GM12878 (cell line): ENCODE measurements at regions of chr19 and their contacts with region 1.

Region 1: GRCh38 chr19:16185123-16185767 is at the start of gene FAM32A:
- DNase-seq: peak; percentile 98
- ATAC-seq: peak; percentile 94
- H3K4me3 ChIP-seq: peak within 1 kb of the TSS; percentile 82
- H3K27ac ChIP-seq: peak within 1 kb of the TSS; percentile 70
- H3K4me1 ChIP-seq: peaks cover 2% of the 10 kb centered on the region; the same call in 1 of the 2 replicates
- H3K27me3 ChIP-seq: no peaks in the 10 kb centered on the region
- CTCF ChIP-seq: no peak
- EP300 ChIP-seq: no peak
- POLR2A ChIP-seq: peak; percentile 93
- RAD21 ChIP-seq: no peak
- polyA plus RNA-seq, gene FAM32A: 33.3 to 43.0 TPM

Region 2: DNA sequence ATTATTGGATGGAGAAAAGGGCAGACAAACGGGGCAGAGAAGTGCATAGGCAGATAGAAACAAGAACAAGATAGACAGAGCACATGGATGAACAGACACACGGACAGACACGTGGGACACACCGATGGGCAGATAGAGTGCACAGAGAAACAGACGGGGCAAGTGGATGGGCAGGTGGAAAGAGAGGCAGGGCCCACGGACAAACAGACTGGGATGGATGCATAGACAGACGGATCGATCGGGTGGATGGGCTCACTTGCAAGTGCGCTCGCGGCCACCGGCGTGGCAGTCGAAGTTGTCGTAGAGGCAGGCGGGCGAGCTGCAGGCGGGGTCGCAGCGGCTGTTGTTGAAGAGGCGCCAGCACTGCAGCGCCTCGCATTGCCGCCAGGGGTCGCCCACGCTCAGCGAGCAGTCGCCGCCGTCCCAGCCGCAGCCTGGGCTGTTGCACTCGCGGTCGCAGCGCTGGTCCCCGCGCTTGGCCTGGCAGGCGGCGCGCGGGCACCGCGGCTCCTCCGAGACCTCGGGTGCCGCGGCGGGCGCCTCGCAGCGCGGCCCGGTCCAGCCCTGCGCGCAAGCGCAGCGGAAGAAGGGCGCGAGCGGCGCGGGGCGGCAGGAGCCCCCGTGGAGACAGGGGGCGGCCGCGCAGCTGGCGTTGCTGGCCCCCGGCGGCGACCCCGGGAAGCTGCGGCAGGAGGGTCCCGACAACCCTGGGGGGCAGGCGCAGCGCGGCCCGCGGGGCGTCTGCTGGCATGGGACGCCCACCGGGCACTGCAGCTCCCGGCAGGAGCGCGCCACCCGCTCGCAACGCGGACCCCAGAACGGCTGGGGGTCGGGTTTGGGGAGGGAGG is 1007.8 kb before region 1 on chr19:
- CTCF ChIA-PET with region 1: no interaction called
- POLR2A ChIA-PET with region 1: no interaction called
- RAD21 ChIA-PET with region 1: no interaction called
- SMC1A ChIA-PET with region 1: no interaction called
- in situ Hi-C with region 1: no loop called
- intact Hi-C with region 1: no loop called
- DNase-seq: peak; percentile 4
- ATAC-seq: peak; percentile 99
- H3K4me3 ChIP-seq: no peak overlapping the region
- H3K27ac ChIP-seq: no peak overlapping the region
- H3K4me1 ChIP-seq: no peaks in the 10 kb centered on the region
- H3K27me3 ChIP-seq: no peaks in the 10 kb centered on the region
- CTCF ChIP-seq: peak; percentile 82 to 99 (median 87)
- EP300 ChIP-seq: no peak
- POLR2A ChIP-seq: no peak
- RAD21 ChIP-seq: peak; percentile 66

Region 3: GRCh38 chr19:15629003-15629880 is 556.0 kb before region 1 on chr19:
- CTCF ChIA-PET with region 1: interaction called, 3 read pairs
- POLR2A ChIA-PET with region 1: no interaction called
- RAD21 ChIA-PET with region 1: interaction called, 5 read pairs
- SMC1A ChIA-PET with region 1: interaction called, 8 read pairs
- in situ Hi-C with region 1: loop called (anchors 5 kb)
- intact Hi-C with region 1: loop called (anchors 1 kb)
- DNase-seq: peak; percentile 9
- ATAC-seq: peak; percentile 93
- H3K4me3 ChIP-seq: no peak overlapping the region
- H3K27ac ChIP-seq: no peak overlapping the region
- H3K4me1 ChIP-seq: no peaks in the 10 kb centered on the region
- H3K27me3 ChIP-seq: no peaks in the 10 kb centered on the region
- CTCF ChIP-seq: peak; percentile 90 to 96 (median 95)
- EP300 ChIP-seq: no peak
- POLR2A ChIP-seq: no peak
- RAD21 ChIP-seq: peak; percentile 93

Region 4: DNA sequence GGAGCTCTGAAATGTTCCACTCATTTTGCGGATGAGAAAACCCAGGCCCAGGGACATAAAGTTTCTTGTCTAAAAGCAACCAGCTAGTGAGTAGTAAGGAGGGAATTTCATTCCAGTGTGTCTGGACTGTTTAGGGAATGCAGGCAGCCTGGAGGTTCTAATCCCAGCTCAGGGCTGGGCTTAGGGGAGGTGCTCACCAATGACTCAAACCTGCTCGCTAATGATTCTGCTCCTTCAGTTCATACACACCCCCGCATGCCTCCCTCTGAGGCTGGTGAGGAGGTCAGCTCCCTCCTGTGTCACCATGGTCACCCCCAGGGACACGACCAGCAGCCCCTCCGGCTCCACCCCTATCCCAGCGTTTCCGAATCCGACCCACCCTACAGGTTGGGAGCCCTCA is 322.0 kb before region 1 on chr19:
- CTCF ChIA-PET with region 1: no interaction called
- POLR2A ChIA-PET with region 1: no interaction called
- RAD21 ChIA-PET with region 1: no interaction called
- SMC1A ChIA-PET with region 1: no interaction called
- in situ Hi-C with region 1: no loop called
- intact Hi-C with region 1: no loop called
- DNase-seq: no peak
- ATAC-seq: no peak
- H3K4me3 ChIP-seq: no peak overlapping the region
- H3K27ac ChIP-seq: no peak overlapping the region
- H3K4me1 ChIP-seq: no peaks in the 10 kb centered on the region
- H3K27me3 ChIP-seq: no peaks in the 10 kb centered on the region
- CTCF ChIP-seq: no peak
- EP300 ChIP-seq: no peak
- POLR2A ChIP-seq: no peak
- RAD21 ChIP-seq: no peak

Region 5: DNA sequence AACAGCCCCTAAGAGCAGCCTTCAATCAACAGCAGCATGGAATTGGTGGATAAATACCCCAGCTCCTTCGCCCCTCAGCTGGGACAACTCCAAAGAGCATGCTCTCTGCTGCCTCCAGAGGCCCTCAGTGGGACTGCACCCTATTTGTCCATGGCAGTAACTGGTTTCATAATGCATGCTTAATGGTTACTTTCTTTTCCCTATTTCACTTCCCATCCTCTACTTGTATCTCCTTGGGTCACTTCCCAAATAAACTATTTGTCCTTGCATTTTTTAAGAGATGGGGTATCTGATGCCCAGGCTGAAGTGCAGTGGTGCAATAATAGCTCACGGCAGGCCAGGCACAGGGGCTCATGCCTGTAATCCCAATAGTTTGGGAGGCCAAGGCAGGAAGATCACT is 122.5 kb before region 1 on chr19:
- CTCF ChIA-PET with region 1: interaction called, 31 read pairs
- POLR2A ChIA-PET with region 1: interaction called, 7 read pairs
- RAD21 ChIA-PET with region 1: interaction called, 6 read pairs
- SMC1A ChIA-PET with region 1: interaction called, 3 read pairs
- in situ Hi-C with region 1: loop called (anchors 5 kb)
- intact Hi-C with region 1: loop called (anchors 1 kb)
- DNase-seq: no peak
- ATAC-seq: peak; percentile 77
- H3K4me3 ChIP-seq: no peak overlapping the region
- H3K27ac ChIP-seq: no peak overlapping the region
- H3K4me1 ChIP-seq: peaks cover 6% of the 10 kb centered on the region; the same call in 1 of the 2 replicates
- H3K27me3 ChIP-seq: no peaks in the 10 kb centered on the region
- CTCF ChIP-seq: peak; percentile 60 to 95 (median 91)
- EP300 ChIP-seq: no peak
- POLR2A ChIP-seq: no peak
- RAD21 ChIP-seq: peak; percentile 25

Region 6: DNA sequence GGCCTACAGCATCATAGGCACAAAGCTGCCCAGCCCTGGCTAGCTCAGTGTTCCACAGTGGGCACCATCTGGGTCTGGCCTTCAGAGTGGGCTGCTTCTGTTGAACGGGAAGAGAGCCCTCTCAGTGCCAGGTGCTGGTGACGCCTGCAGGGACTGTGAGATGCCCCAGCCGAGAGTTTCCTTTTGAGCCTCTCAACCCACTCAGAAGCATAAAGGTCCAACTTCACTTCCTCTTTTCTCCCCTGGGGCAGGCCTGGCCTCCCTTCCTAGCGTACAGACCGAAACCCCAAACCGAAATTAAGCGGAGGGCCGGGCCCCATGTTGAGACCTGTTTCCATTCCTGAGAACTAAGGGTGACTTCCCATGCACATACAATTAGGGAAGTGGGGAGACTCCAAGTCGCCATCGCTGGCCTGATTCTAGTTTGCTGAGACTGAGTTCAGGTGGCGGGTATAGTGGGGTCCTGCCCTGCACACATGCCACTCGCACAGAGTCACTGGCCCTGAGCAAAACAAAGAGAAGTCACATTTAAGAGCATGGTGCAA is 66.7 kb before region 1 on chr19:
- CTCF ChIA-PET with region 1: interaction called, 59 read pairs
- POLR2A ChIA-PET with region 1: interaction called, 11 read pairs
- RAD21 ChIA-PET with region 1: interaction called, 21 read pairs
- SMC1A ChIA-PET with region 1: interaction called, 49 read pairs
- in situ Hi-C with region 1: no loop called
- intact Hi-C with region 1: loop called (anchors 1 kb)
- DNase-seq: peak; percentile 97
- ATAC-seq: peak; percentile 82
- H3K4me3 ChIP-seq: peak overlapping the region; percentile 59; the same call in 1 of the 2 replicates
- H3K27ac ChIP-seq: peak overlapping the region; percentile 100
- H3K4me1 ChIP-seq: peaks cover 62% of the 10 kb centered on the region
- H3K27me3 ChIP-seq: no peaks in the 10 kb centered on the region
- CTCF ChIP-seq: no peak
- EP300 ChIP-seq: peak; percentile 95 to 99
- POLR2A ChIP-seq: peak; percentile 80
- RAD21 ChIP-seq: no peak

Region 7: DNA sequence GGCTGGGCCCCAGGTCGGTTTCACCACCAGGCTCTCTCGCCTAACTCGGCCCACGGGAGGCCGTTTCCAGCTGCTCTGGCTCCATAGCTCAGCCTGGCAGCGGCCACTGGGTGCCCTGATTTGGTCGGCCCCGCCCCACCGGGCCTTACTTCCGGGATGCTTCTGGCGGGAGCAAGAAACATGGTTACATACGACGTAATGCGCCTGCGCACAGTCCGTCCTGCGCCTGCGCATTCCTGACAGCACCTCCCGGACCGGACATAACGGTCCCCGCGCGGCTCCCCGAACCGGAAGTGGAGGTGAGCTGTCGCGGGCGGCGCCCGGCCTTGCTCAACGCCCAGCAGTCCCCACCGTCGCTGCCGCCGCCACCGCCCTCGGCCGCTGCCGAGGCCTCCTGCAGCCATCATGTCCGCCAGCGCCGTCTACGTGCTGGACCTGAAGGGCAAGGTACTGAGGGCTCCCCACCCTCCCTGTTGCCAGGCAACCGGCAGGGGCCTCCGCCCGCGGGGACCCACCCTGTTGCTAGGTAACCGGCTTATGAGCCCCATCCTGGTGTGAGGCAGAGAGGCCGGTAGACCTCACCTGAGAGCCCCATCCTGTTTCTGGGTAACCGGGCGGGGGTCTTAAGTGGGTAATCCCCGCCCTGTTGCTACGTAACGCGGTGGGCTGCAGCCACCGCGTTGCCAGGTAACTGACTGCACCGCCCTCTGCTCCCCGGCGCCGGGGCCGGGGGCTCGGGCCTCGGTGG is 12.6 kb after region 1 on chr19 and contains the start of gene AP1M1:
- CTCF ChIA-PET with region 1: interaction called, 44 read pairs
- POLR2A ChIA-PET with region 1: interaction called, 12 read pairs
- RAD21 ChIA-PET with region 1: interaction called, 13 read pairs
- SMC1A ChIA-PET with region 1: interaction called, 18 read pairs
- in situ Hi-C with region 1: no loop called
- intact Hi-C with region 1: no loop called
- DNase-seq: peak; percentile 98
- ATAC-seq: peak; percentile 99
- H3K4me3 ChIP-seq: peak within 1 kb of the TSS; percentile 84
- H3K27ac ChIP-seq: peak within 1 kb of the TSS; percentile 83
- H3K4me1 ChIP-seq: peaks cover 13% of the 10 kb centered on the region
- H3K27me3 ChIP-seq: no peaks in the 10 kb centered on the region
- CTCF ChIP-seq: no peak
- EP300 ChIP-seq: no peak
- POLR2A ChIP-seq: peak; percentile 86
- RAD21 ChIP-seq: no peak
- polyA plus RNA-seq, gene AP1M1: 1.0 to 5.6 TPM

Region 8: GRCh38 chr19:16232568-16232967 is 47.3 kb after region 1 on chr19:
- CTCF ChIA-PET with region 1: no interaction called
- POLR2A ChIA-PET with region 1: no interaction called
- RAD21 ChIA-PET with region 1: no interaction called
- SMC1A ChIA-PET with region 1: no interaction called
- in situ Hi-C with region 1: no loop called
- intact Hi-C with region 1: no loop called
- DNase-seq: no peak
- ATAC-seq: no peak
- H3K4me3 ChIP-seq: no peak overlapping the region
- H3K27ac ChIP-seq: no peak overlapping the region
- H3K4me1 ChIP-seq: no peaks in the 10 kb centered on the region
- H3K27me3 ChIP-seq: no peaks in the 10 kb centered on the region
- CTCF ChIP-seq: no peak
- EP300 ChIP-seq: no peak
- POLR2A ChIP-seq: no peak
- RAD21 ChIP-seq: no peak